B cell (primary cell): ENCODE measurements at regions of chr16 and their contacts with region 1.

Region 1: DNA sequence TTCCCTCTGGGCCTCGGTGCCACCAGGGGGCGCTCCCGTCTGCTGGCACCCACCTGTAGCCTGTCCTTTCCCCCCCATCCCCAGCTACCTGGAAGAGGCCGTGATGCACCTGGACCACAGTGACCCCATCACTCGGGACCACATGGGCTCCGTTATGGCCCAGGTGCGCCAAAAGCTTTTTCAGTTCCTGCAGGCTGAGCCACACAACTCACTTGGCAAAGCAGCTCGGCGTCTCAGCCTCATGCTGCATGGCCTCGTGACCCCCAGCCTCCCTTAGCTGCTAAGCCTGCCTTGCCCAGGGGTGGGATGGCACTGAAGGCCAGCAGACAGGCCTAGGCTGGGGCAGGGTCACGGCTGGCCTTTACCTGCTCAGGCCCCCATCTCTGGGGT is 818 bp upstream of the NRN1L start:
- DNase-seq: peak; percentile 81
- ATAC-seq: peak; percentile 88
- H3K4me3 ChIP-seq: no peak overlapping the region
- H3K4me3 Mint-ChIP-seq: no peak overlapping the region
- H3K27ac ChIP-seq: no peak overlapping the region
- H3K27ac Mint-ChIP-seq: no peak overlapping the region
- H3K4me1 ChIP-seq: no peaks in the 10 kb centered on the region
- H3K4me1 Mint-ChIP-seq: no peaks in the 10 kb centered on the region
- H3K27me3 ChIP-seq: no peaks in the 10 kb centered on the region
- H3K27me3 Mint-ChIP-seq: no peaks in the 10 kb centered on the region
- CTCF ChIP-seq: peak; percentile 96

Region 2: DNA sequence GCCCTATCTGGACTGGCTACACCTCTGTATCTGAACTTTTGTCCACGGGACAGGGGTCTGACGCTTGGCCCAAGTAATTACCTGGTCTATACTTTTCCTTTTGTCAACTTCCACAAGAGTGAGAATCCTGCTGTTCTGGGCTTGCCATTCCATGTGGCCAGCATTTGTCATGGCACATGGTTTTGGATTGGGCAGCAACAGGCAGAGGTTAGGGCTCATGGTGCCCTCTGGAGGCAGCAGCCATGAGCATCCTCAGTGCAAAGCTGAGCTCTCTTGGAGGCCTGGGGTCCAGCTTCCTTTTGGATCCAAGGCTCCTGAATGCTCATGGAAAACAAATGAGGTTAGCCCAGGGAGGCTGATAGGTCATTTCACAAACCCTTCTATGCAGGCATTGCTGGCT is 18.6 kb before region 1 on chr16:
- CTCF ChIA-PET with region 1: interaction called, 15 read pairs
- POLR2A ChIA-PET with region 1: interaction called, 3 read pairs
- intact Hi-C with region 1: no loop called
- DNase-seq: no peak
- ATAC-seq: peak; percentile 33
- H3K4me3 ChIP-seq: no peak overlapping the region
- H3K4me3 Mint-ChIP-seq: no peak overlapping the region
- H3K27ac ChIP-seq: no peak overlapping the region
- H3K27ac Mint-ChIP-seq: no peak overlapping the region
- H3K4me1 ChIP-seq: no peaks in the 10 kb centered on the region
- H3K4me1 Mint-ChIP-seq: peaks cover 7% of the 10 kb centered on the region
- H3K27me3 ChIP-seq: no peaks in the 10 kb centered on the region
- H3K27me3 Mint-ChIP-seq: no peaks in the 10 kb centered on the region
- CTCF ChIP-seq: no peak

Region 3: GRCh38 chr16:67928561-67929364 is 44.9 kb after region 1 on chr16:
- CTCF ChIA-PET with region 1: interaction called, 30 read pairs
- POLR2A ChIA-PET with region 1: no interaction called
- intact Hi-C with region 1: loop called (anchors 1 kb)
- DNase-seq: peak; percentile 79
- ATAC-seq: peak; percentile 82
- H3K4me3 ChIP-seq: no peak overlapping the region
- H3K4me3 Mint-ChIP-seq: no peak overlapping the region
- H3K27ac ChIP-seq: no peak overlapping the region
- H3K27ac Mint-ChIP-seq: peak overlapping the region; percentile 50
- H3K4me1 ChIP-seq: peaks cover 9 to 27% of the 10 kb centered on the region in 2 donors
- H3K4me1 Mint-ChIP-seq: peaks cover 26% of the 10 kb centered on the region
- H3K27me3 ChIP-seq: no peaks in the 10 kb centered on the region
- H3K27me3 Mint-ChIP-seq: no peaks in the 10 kb centered on the region
- CTCF ChIP-seq: peak; percentile 77

Region 4: DNA sequence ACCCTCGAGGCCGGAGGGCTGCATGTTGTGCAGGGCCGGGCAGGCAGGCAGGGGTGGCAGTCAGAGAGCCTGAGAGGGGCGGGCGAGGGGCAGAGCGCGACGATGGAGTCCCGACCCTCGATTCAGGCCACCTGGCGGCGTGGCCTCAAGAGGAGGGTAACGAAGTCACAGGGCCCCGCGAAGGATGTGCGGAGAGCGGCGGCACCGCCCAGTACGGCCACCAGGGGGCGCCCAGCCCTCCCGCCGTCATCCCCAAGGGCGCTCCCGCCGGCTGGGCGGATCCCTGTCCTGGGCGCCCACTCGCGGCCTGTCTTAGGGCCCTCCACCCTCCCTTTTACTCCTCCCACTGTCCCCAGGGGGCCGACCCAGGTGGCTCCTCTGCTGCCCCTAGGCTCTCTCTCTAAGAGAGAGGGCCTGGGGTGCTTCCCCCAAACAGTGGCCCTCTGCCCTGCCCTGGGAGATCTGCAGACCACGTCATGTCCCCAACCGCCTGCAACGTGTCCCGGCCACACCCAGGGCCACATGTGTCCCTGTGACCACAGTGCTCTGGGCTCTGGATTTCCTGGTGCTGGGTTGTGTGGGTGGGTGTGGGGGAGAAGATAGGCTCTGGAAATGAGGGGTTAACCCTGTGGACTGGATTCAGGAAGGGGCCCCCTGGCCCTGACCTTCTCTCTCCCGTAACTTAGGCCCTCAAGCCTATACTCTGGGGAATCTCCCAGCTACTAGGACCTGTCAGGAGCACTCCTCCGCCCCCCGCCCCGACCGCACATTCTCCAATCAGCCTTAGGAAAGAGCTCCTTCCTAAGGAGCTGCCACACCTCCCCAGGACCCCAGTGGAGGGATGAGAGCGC is 109.5 kb after region 1 on chr16:
- CTCF ChIA-PET with region 1: interaction called, 13 read pairs
- POLR2A ChIA-PET with region 1: no interaction called
- intact Hi-C with region 1: no loop called
- DNase-seq: peak; percentile 92
- ATAC-seq: peak; percentile 87
- H3K4me3 ChIP-seq: peak overlapping the region; percentile 26 to 40 (median 31)
- H3K4me3 Mint-ChIP-seq: peak overlapping the region; percentile 82
- H3K27ac ChIP-seq: peak overlapping the region; percentile 86 to 89
- H3K27ac Mint-ChIP-seq: peak overlapping the region; percentile 99
- H3K4me1 ChIP-seq: peaks cover 49 to 60% of the 10 kb centered on the region in 2 donors
- H3K4me1 Mint-ChIP-seq: peaks cover 67% of the 10 kb centered on the region
- H3K27me3 ChIP-seq: no peaks in the 10 kb centered on the region
- H3K27me3 Mint-ChIP-seq: no peaks in the 10 kb centered on the region
- CTCF ChIP-seq: peak; percentile 96

Region 5: DNA sequence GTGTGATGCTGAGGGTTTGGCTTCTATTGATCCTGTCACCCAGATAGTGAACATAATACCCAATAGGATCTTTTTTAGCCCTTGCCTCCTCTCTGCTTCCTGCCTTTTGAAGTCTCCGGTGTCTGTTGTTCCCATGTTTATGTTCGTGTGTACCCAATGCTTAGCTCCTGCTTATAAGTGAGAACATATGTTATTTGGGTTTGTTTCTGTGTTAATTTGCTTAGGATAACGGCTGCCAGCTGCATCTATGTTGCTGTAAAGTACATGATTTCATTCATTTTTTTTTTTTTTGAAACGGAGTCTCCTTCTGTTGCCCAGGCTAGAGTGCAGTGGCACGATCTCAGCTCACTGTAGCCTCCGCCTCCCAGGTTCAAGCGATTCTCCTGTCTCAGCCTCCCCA is 162.2 kb after region 1 on chr16:
- CTCF ChIA-PET with region 1: interaction called, 151 read pairs
- POLR2A ChIA-PET with region 1: no interaction called
- intact Hi-C with region 1: no loop called
- DNase-seq: no peak
- ATAC-seq: no peak
- H3K4me3 ChIP-seq: no peak overlapping the region
- H3K4me3 Mint-ChIP-seq: no peak overlapping the region
- H3K27ac ChIP-seq: no peak overlapping the region
- H3K27ac Mint-ChIP-seq: peak overlapping the region; percentile 8
- H3K4me1 ChIP-seq: peaks cover 16% of the 10 kb centered on the region in 2 donors
- H3K4me1 Mint-ChIP-seq: peaks cover 49% of the 10 kb centered on the region
- H3K27me3 ChIP-seq: no peaks in the 10 kb centered on the region
- H3K27me3 Mint-ChIP-seq: no peaks in the 10 kb centered on the region
- CTCF ChIP-seq: no peak

Region 6: GRCh38 chr16:68074850-68075555 is 191.1 kb after region 1 on chr16:
- CTCF ChIA-PET with region 1: interaction called, 16 read pairs
- POLR2A ChIA-PET with region 1: no interaction called
- intact Hi-C with region 1: no loop called
- DNase-seq: peak; percentile 93
- ATAC-seq: peak; percentile 86
- H3K4me3 ChIP-seq: peak overlapping the region in 4 of 5 experiments; percentile 11 to 48 (median 30)
- H3K4me3 Mint-ChIP-seq: peak overlapping the region; percentile 85
- H3K27ac ChIP-seq: peak overlapping the region; percentile 77 to 91
- H3K27ac Mint-ChIP-seq: peak overlapping the region; percentile 94
- H3K4me1 ChIP-seq: peaks cover 88 to 99% of the 10 kb centered on the region in 2 donors
- H3K4me1 Mint-ChIP-seq: peaks cover 87% of the 10 kb centered on the region
- H3K27me3 ChIP-seq: no peaks in the 10 kb centered on the region
- H3K27me3 Mint-ChIP-seq: no peaks in the 10 kb centered on the region
- CTCF ChIP-seq: no peak